PC-3 (cell line): ENCODE measurements at regions of chr14 and their contacts with region 1.

Region 1: DNA sequence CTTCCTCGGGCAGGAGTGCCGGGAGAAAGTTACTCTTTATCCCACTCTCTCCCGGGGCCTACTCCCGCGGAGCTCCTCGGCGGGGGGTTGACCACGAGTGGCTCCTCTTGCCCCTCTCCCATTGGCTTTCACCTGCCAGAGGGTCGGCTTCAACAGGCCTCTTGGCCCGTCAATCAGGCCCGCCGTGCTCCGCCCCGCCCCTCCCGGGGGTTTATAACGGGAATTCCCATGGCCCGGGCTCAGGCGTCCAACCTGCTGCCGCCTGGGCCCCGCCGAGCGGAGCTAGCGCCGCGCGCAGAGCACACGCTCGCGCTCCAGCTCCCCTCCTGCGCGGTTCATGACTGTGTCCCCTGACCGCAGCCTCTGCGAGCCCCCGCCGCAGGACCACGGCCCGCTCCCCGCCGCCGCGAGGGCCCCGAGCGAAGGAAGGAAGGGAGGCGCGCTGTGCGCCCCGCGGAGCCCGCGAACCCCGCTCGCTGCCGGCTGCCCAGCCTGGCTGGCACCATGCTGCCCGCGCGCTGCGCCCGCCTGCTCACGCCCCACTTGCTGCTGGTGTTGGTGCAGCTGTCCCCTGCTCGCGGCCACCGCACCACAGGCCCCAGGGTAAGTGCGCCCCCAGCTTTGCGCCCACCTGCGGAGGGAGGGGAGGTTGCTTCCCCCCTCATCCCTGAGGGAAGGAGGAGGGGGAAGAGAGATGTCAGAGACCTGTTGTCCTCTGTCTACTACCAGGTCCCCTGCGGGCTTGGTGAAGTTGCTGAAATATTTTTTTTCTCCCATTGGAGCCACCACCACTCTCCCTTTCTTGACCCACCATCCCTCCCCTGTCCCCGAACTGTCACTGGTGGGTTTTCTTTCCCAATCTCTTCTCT is at the start of gene SMOC1:
- DNase-seq: no peak
- ATAC-seq: peak; percentile 60
- H3K4me3 ChIP-seq: no peak within 1 kb of the TSS
- H3K27ac ChIP-seq: no peak within 1 kb of the TSS
- H3K4me1 ChIP-seq: no peaks in the 10 kb centered on the region
- H3K27me3 ChIP-seq: peaks cover 88% of the 10 kb centered on the region
- CTCF ChIP-seq: no peak
- total RNA-seq, gene SMOC1: not detected in 2 replicates

Region 2: DNA sequence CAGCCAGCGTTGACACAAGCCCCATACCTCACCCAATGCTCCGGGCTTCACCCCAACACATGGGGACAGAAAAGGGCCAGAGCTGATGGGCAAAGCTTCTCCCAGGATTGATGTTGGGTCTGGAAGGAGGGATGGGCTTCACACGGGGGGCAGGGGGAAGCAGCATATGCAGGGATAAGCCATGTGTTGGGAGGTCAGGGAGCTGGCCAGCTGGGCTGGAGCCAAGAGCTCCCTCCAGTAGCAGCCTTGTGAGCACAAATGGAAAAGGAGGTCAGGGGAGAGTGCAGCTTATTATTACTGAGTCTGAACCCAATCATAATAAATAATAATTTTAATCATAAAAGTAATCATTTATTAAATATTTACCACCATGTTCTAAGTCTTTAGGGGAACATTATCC is 385.6 kb before region 1 on chr14:
- CTCF ChIA-PET with region 1: no interaction called
- POLR2A ChIA-PET with region 1: no interaction called
- intact Hi-C with region 1: no loop called
- DNase-seq: no peak
- ATAC-seq: no peak
- H3K4me3 ChIP-seq: no peak overlapping the region
- H3K27ac ChIP-seq: no peak overlapping the region
- H3K4me1 ChIP-seq: no peaks in the 10 kb centered on the region
- H3K27me3 ChIP-seq: peaks cover 8% of the 10 kb centered on the region; the same call in 1 of the 2 replicates
- CTCF ChIP-seq: no peak

Region 3: DNA sequence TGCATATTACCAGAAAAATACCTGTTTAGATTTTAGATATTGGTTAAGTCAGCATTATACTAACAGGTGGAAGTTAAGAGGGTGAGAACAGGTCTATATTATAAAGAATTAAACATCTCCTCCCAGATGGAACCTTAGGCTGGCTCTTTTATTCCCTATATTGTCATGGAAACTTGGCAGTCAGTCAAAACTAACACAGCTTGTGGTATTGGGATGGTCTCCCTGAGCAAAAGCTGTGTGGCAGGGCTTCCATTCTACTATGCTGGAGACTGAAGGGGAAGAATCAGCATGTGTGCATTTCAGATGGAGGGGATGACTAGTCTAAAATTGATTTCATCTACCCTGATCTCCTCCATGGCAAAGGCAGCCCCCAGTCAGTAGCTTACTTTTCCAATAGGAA is 66.5 kb after region 1 on chr14:
- CTCF ChIA-PET with region 1: no interaction called
- POLR2A ChIA-PET with region 1: no interaction called
- intact Hi-C with region 1: no loop called
- DNase-seq: no peak
- ATAC-seq: no peak
- H3K4me3 ChIP-seq: no peak overlapping the region
- H3K27ac ChIP-seq: no peak overlapping the region
- H3K4me1 ChIP-seq: no peaks in the 10 kb centered on the region
- H3K27me3 ChIP-seq: peaks cover 93% of the 10 kb centered on the region
- CTCF ChIP-seq: no peak

Region 4: DNA sequence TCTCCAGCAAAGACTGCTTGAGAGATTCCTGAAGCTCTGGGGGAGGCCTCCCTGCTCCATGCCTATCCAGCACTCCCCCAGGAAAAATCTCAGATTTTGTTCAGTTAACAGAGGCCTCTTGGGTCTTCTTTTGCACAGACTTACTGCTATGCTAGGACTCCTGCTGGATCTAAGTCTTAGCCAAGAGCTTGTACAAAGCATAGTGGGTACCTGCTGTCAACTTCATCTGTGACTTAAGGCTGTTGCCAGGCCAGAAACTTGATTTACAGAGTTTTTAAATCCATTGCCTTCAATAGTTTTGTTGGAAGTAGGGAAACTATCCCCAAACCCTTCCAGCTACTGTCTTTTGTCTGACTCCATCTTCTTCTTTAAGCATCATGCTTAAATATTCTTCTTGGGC is 140.3 kb after region 1 on chr14:
- CTCF ChIA-PET with region 1: no interaction called
- POLR2A ChIA-PET with region 1: interaction called, 14 read pairs
- intact Hi-C with region 1: no loop called
- DNase-seq: no peak
- ATAC-seq: no peak
- H3K4me3 ChIP-seq: no peak overlapping the region
- H3K27ac ChIP-seq: no peak overlapping the region
- H3K4me1 ChIP-seq: no peaks in the 10 kb centered on the region
- H3K27me3 ChIP-seq: peaks cover 95% of the 10 kb centered on the region
- CTCF ChIP-seq: no peak